CD4-positive, alpha-beta memory T cell (primary cell): ENCODE measurements at regions of chr7 and their contacts with region 1.

Region 1: GRCh38 chr7:50190776-50191175 is 97.7 kb upstream of the ZPBP start:
- DNase-seq: no peak
- H3K4me3 ChIP-seq: no peak overlapping the region
- H3K4me3 Mint-ChIP-seq: peak overlapping the region in 1 of 8 donors; percentile 22
- H3K27ac ChIP-seq: no peak overlapping the region
- H3K27ac Mint-ChIP-seq: no peak overlapping the region
- H3K4me1 ChIP-seq: no peaks in the 10 kb centered on the region
- H3K4me1 Mint-ChIP-seq: peaks cover 0 to 10% (median 2%) of the 10 kb centered on the region in 4 donors
- H3K27me3 ChIP-seq: no peaks in the 10 kb centered on the region
- H3K27me3 Mint-ChIP-seq: peaks cover 0 to 2% of the 10 kb centered on the region in 2 donors

Region 2: GRCh38 chr7:50156706-50157105 is 34.1 kb before region 1 on chr7:
- CTCF ChIA-PET with region 1: no interaction called
- POLR2A ChIA-PET with region 1: no interaction called
- intact Hi-C with region 1: loop called (anchors 5 kb)
- DNase-seq: no peak
- H3K4me3 ChIP-seq: no peak overlapping the region
- H3K4me3 Mint-ChIP-seq: peak overlapping the region; percentile 17 to 87 (median 66)
- H3K27ac ChIP-seq: no peak overlapping the region
- H3K27ac Mint-ChIP-seq: peak overlapping the region; percentile 67 to 89 (median 87)
- H3K4me1 ChIP-seq: peaks cover 18% of the 10 kb centered on the region
- H3K4me1 Mint-ChIP-seq: peaks cover 16 to 28% (median 25%) of the 10 kb centered on the region in 4 donors
- H3K27me3 ChIP-seq: no peaks in the 10 kb centered on the region
- H3K27me3 Mint-ChIP-seq: no peaks in the 10 kb centered on the region